ENCODE measurements at regions of chr10 and their contacts with region 1.

Region 1: GRCh38 chr10:118754720-118755480 is at the start of gene CACUL1:
- DNase-seq: peak; percentile 99
- H3K4me3 ChIP-seq: peak within 1 kb of the TSS; percentile 98
- H3K27ac ChIP-seq: peak within 1 kb of the TSS; percentile 60
- H3K4me1 ChIP-seq: peaks cover 26% of the 10 kb centered on the region
- CTCF ChIP-seq: no peak
- total RNA-seq, gene CACUL1: 12.0 and 12.8 TPM in 2 replicates

Region 2: DNA sequence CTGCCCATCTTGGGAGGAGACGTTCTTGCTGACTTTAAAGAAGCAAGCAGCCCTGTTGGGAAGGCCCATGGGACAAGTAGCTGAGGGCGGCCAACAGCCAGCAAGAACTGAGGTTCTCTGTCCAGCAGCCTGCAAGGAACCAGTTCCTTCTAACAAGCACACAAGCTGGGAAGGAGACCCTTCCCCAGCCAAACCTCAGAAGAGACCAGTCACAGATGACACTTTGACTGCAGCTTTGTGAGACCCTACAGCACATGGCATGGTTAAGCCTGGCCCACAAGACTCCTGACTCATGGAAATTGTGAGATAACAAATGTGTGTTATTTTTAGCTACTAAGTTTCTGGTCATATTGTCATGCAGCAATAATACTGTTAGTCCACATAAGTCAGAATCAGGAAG is 259.4 kb before region 1 on chr10:
- CTCF ChIA-PET with region 1: no interaction called
- POLR2A ChIA-PET with region 1: no interaction called
- intact Hi-C with region 1: no loop called
- DNase-seq: no peak
- H3K4me3 ChIP-seq: no peak overlapping the region
- H3K27ac ChIP-seq: no peak overlapping the region
- H3K4me1 ChIP-seq: no peaks in the 10 kb centered on the region
- CTCF ChIP-seq: no peak

Region 3: DNA sequence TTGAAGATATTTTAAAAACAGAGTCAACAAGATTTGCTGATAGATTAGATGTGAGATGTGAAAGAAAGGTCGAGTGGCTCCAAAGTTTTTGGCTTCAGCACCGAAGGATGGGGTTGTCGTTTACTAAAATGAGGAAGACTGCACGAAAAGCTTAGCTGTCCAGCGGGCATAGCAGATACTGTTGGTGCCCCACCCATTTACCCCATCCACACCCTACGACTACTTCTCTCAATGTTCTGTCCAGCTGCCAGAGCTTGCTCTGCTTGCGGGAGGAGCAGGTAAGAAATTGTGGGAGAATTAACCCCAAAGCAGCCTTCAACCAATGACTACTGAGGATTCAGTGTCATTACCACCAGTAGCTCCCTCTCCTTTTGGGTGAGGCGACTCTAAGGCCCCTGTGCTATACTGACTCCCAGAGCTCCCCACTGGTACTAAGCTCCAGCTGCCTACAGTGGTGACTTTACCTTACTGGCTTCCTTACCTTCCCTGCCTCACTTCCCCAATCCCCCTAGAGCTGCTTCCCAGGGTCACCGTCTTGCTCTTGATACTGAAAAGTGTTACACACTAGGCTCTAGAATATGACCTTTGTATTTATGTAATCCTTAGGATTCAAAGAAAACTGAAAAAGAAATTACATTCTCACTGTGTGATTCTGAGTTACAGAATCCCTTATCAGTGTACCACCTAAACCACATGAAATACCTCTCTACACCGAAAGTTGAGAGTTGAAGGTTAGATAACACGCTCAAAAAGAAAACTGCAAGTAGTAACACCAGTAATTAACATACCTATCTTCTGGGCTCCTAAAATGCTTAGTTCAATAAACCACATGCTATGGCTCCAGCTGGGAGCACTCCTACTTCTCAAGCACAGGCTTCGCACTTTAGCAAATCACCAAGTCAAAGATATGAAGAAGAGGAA is 22.4 kb before region 1 on chr10:
- CTCF ChIA-PET with region 1: no interaction called
- POLR2A ChIA-PET with region 1: interaction called, 37 read pairs
- intact Hi-C with region 1: no loop called
- DNase-seq: no peak
- H3K4me3 ChIP-seq: no peak overlapping the region
- H3K27ac ChIP-seq: no peak overlapping the region
- H3K4me1 ChIP-seq: peaks cover 19% of the 10 kb centered on the region
- CTCF ChIP-seq: no peak

Region 4: GRCh38 chr10:119028900-119029612 is 274.2 kb after region 1 on chr10:
- CTCF ChIA-PET with region 1: no interaction called
- POLR2A ChIA-PET with region 1: no interaction called
- intact Hi-C with region 1: loop called (anchors 5 kb)
- DNase-seq: peak; percentile 92
- H3K4me3 ChIP-seq: peak overlapping the region; percentile 53
- H3K27ac ChIP-seq: no peak overlapping the region
- H3K4me1 ChIP-seq: peaks cover 37% of the 10 kb centered on the region
- CTCF ChIP-seq: no peak